ENCODE measurements at regions of chr20 and their contacts with region 1.

Region 1: DNA sequence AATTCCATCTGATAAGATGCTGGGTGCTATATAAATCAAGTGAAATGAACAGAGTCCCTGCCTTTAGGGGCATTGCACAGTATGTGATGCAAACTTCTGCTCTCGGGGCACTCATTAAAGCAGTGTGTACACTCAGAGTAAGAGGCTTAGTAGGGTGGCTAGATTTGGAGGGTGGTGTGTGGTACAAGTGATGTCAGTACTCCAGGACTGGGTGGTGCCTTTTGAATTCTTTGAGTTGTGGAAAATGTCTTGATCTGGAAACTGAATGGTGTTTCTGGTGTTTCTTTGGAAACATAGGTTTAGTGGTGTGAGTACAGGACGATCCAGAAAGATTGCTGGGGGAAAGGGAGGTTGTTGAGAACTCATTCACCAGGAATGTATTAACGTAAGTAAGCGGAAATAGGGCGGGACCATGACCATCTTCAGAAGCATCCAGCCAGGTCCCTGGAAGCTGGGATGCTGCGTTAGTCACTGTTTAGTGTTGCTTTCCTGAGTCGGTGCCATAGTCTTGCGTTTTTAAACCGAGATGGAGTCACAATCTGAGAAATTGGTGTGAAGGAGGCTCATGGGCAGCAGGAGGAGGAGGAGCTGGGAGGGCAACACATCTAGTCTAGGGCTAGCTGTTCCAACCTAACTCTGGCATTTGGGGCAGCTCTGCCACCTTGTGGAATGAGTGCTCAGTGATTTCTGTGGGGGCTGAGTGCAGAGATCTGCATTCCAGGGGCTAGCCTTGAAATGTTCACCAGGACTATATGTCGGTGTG is 70.3 kb downstream of the SCAND1 start:
- DNase-seq: peak; percentile 61
- H3K4me3 ChIP-seq: peak overlapping the region; percentile 30 to 50
- H3K27ac ChIP-seq: peak overlapping the region; percentile 79 to 100
- H3K4me1 ChIP-seq: peaks cover 19 to 25% of the 10 kb centered on the region in 2 experiments
- H3K27me3 ChIP-seq: no peaks in the 10 kb centered on the region
- CTCF ChIP-seq: peak; percentile 85
- EP300 ChIP-seq: peak; percentile 37 to 83; a peak in 3 of 4 replicates
- RAD21 ChIP-seq: peak; percentile 92

Region 2: GRCh38 chr20:35735828-35736470 is 148.0 kb before region 1 on chr20:
- CTCF ChIA-PET with region 1: interaction called, 14 read pairs
- POLR2A ChIA-PET with region 1: no interaction called
- DNase-seq: no peak
- H3K4me3 ChIP-seq: no peak overlapping the region
- H3K27ac ChIP-seq: no peak overlapping the region
- H3K4me1 ChIP-seq: peaks cover 14 to 24% of the 10 kb centered on the region in 2 experiments; a peak in 3 of 4 replicates
- H3K27me3 ChIP-seq: no peaks in the 10 kb centered on the region
- CTCF ChIP-seq: no peak
- EP300 ChIP-seq: no peak
- RAD21 ChIP-seq: no peak

Region 3: DNA sequence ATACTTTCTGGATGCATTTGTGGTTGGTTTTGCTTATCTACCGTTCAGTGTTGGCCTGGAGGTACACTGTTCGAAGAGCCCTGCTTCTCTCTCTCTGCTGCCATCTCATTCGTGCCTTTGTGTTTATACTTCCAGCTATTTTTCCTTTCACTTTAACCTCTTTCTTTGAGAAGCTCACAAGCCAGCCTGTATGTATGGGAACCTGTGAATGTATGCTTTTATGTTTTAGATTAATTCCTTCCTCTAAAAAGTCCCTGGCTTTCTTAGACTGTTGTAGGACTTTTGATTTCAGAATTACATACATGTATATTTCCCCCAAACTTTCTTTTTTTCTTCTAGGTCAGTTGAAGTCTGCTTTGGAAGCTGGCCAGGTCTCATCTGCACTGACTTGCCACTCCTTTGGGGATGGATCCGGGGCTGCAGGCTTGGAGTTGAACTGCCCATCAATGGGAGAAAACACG is 12.6 kb before region 1 on chr20:
- CTCF ChIA-PET with region 1: interaction called, 16 read pairs
- POLR2A ChIA-PET with region 1: no interaction called
- DNase-seq: peak; percentile 45
- H3K4me3 ChIP-seq: peak overlapping the region; percentile 27 to 60; a peak in 3 of 4 replicates
- H3K27ac ChIP-seq: peak overlapping the region; percentile 81 to 99
- H3K4me1 ChIP-seq: peaks cover 7 to 33% of the 10 kb centered on the region in 2 experiments
- H3K27me3 ChIP-seq: no peaks in the 10 kb centered on the region
- CTCF ChIP-seq: no peak
- EP300 ChIP-seq: no peak
- RAD21 ChIP-seq: no peak

Region 4: GRCh38 chr20:35917077-35917476 is 33.1 kb after region 1 on chr20:
- CTCF ChIA-PET with region 1: no interaction called
- POLR2A ChIA-PET with region 1: no interaction called
- DNase-seq: no peak
- H3K4me3 ChIP-seq: no peak overlapping the region
- H3K27ac ChIP-seq: no peak overlapping the region
- H3K4me1 ChIP-seq: no peaks in the 10 kb centered on the region; a peak in 1 of 4 replicates
- H3K27me3 ChIP-seq: no peaks in the 10 kb centered on the region
- CTCF ChIP-seq: no peak
- EP300 ChIP-seq: no peak
- RAD21 ChIP-seq: no peak